Endothelial cell of umbilical vein (primary cell): ENCODE measurements at regions of chr1 and their contacts with region 1.

Region 1: GRCh38 chr1:10796019-10796944 is at the start of gene CASZ1:
- DNase-seq: peak; percentile 83
- H3K4me3 ChIP-seq: peak within 1 kb of the TSS; percentile 48 to 68 (median 56)
- H3K27ac ChIP-seq: no peak within 1 kb of the TSS
- H3K4me1 ChIP-seq: peaks cover 14% of the 10 kb centered on the region
- H3K27me3 ChIP-seq: peaks cover 39 to 58% of the 10 kb centered on the region in 2 experiments
- CTCF ChIP-seq: no peak
- POLR2A ChIP-seq: no peak
- total RNA-seq, gene CASZ1: 5.1 and 5.2 TPM in 2 replicates

Region 2: DNA sequence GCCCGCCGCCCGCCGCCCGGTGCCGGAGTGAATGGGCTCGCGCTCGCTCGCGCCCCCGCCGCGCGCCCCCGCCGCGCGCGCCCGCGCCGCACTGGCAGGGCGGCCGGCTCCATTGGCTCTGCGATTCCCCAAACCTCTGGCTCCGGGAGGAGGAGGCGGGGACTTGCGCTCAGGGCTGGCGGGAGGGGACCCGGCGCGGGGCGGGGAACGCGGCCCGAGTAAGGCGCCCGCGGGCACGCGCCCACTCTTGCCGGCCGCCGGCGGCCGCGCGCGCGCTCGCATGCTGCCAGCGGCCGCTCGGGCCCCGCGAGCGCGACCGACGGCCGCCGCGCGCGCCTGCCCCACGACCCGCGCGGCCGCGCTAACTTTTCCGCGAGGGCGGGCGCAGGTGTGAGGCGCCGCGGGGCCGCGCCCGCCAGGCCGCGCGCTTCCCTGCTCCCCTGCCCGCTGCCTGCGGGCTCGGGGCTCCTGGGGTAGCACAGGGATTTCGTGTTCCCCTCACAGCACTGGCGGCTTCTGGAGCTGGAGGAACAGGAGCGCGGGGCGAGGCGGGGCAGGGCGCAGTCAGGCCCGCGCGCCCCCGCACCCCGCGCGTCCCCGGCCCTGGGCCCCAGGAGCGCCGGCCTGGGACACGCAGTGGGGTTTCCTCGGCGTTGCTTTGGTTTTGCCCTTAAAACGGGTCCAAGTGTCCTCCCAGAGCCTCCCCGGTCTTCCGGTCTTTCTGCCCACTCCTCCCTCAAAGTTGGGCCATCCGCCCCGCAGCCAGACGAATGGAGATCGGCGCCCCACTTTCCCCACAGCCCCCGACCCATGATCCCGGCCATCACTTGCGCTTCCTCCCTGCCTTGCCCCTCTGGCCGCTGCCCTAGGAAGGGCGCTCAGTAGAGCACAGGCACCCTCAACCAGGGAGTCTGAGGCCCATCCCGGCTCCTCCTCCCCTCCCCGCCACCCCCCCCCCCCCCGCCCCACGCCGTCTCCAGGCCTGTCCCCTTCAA is 101.4 kb before region 1 on chr1:
- CTCF ChIA-PET with region 1: interaction called, 3 read pairs
- POLR2A ChIA-PET with region 1: no interaction called
- dilution Hi-C with region 1: no loop called
- intact Hi-C with region 1: loop called (anchors 2 kb)
- DNase-seq: peak; percentile 77
- H3K4me3 ChIP-seq: peak overlapping the region; percentile 28 to 51 (median 31)
- H3K27ac ChIP-seq: no peak overlapping the region
- H3K4me1 ChIP-seq: no peaks in the 10 kb centered on the region
- H3K27me3 ChIP-seq: peaks cover 2 to 3% of the 10 kb centered on the region in 2 experiments
- CTCF ChIP-seq: no peak
- POLR2A ChIP-seq: no peak

Region 3: DNA sequence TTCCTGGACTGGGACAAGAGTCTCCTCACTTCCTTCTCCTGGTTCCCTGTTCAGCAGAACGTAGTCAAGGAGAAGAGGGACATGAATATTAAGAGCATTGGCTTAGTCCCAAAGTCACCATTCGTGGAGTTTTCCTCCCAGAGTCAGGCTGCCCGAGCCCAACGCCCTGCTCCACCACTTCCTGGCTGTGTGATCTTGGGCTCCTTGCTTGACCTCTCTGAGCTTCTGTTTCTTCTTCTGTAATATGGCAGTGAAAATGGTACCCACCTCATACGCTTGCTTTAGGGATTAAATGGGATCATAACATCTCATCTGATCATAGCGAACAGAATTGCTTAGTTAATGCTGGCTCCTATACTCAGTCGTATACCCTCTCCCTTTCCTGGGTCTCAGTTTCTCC is 12.2 kb after region 1 on chr1:
- CTCF ChIA-PET with region 1: no interaction called
- POLR2A ChIA-PET with region 1: no interaction called
- dilution Hi-C with region 1: no loop called
- intact Hi-C with region 1: loop called (anchors 1 kb)
- DNase-seq: no peak
- H3K4me3 ChIP-seq: no peak overlapping the region
- H3K27ac ChIP-seq: no peak overlapping the region
- H3K4me1 ChIP-seq: no peaks in the 10 kb centered on the region
- H3K27me3 ChIP-seq: peaks cover 15 to 18% of the 10 kb centered on the region in 2 experiments
- CTCF ChIP-seq: no peak
- POLR2A ChIP-seq: no peak

Region 4: GRCh38 chr1:10824821-10825423 is 28.6 kb after region 1 on chr1:
- CTCF ChIA-PET with region 1: no interaction called
- POLR2A ChIA-PET with region 1: no interaction called
- dilution Hi-C with region 1: no loop called
- intact Hi-C with region 1: no loop called
- DNase-seq: peak; percentile 4
- H3K4me3 ChIP-seq: no peak overlapping the region
- H3K27ac ChIP-seq: no peak overlapping the region
- H3K4me1 ChIP-seq: no peaks in the 10 kb centered on the region
- H3K27me3 ChIP-seq: peaks cover 0 to 1% of the 10 kb centered on the region in 2 experiments
- CTCF ChIP-seq: no peak
- POLR2A ChIP-seq: no peak

Region 5: DNA sequence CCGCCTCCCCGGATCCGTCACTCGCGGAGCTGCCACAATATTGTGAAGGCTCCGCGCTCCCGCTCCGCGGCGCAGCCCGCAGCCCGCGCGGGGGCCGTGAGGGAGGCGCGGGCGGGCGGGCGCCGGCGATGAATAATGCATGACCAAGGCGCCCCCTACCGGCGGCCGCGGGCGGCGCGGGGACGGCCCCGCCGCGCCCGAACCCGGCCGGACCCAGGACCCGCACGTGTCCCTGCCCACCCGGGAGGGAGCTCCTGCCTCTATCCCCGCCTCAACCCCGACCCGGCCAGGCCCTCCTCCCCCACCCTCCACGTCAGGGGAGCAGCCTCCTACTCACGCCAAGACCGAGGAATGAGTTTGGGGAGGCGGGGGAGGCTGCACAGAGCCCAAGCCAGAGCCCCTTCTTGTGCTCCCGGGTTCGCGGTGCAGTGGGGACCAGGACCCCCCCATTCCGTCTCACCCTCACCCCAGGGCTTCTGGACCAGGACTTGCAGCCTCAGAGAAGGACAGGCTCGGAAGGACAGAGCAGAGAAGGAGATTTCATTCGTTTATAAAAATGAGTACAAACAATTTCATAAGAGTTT is 70.9 kb after region 1 on chr1:
- CTCF ChIA-PET with region 1: no interaction called
- POLR2A ChIA-PET with region 1: no interaction called
- dilution Hi-C with region 1: no loop called
- intact Hi-C with region 1: no loop called
- DNase-seq: peak; percentile 22
- H3K4me3 ChIP-seq: peak overlapping the region in 1 of 3 experiments; percentile 22
- H3K27ac ChIP-seq: no peak overlapping the region
- H3K4me1 ChIP-seq: no peaks in the 10 kb centered on the region
- H3K27me3 ChIP-seq: peaks cover 9 to 11% of the 10 kb centered on the region in 2 experiments
- CTCF ChIP-seq: peak; percentile 48 to 77
- POLR2A ChIP-seq: no peak